Aorta (tissue), 5 donors: ENCODE measurements at regions of chr1 and their contacts with region 1.

Region 1: DNA sequence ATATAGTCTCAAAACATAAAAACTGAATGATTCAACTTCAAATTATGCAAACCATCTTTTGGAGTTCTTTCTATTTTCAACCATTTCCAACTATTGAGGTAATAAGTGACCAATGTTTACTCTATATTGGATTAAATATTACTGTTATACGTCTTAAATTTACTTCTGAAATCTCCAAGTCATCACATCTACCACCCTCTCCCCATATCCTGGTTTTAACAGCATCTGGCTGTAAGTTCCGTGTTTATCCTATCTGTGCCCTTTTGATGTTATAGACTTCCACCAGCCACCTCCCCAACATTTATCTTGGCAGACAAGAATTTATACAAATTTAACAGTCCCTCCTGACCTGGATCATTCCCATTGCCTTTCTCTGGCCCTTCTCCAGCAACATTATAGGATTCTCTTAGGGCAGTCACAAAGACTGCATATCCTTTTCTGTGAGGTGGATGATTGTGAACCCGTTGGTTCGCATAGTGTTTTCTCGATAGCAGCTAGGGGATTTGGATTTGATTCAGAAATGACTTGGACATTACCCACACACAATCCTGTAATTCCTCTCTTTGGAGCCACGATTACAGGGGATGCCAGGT is 313.4 kb upstream of the FMN2 start:
- DNase-seq: no peak
- ATAC-seq: no peak
- H3K4me3 ChIP-seq: no peak overlapping the region
- H3K27ac ChIP-seq: no peak overlapping the region
- H3K4me1 ChIP-seq: peaks cover 3 to 4% of the 10 kb centered on the region in 2 donors
- H3K27me3 ChIP-seq: no peaks in the 10 kb centered on the region

Region 2: GRCh38 chr1:239204401-239204800 is 573.9 kb before region 1 on chr1:
- intact Hi-C with region 1: no loop called
- DNase-seq: no peak
- ATAC-seq: no peak
- H3K4me3 ChIP-seq: no peak overlapping the region
- H3K27ac ChIP-seq: no peak overlapping the region
- H3K4me1 ChIP-seq: no peaks in the 10 kb centered on the region
- H3K27me3 ChIP-seq: no peaks in the 10 kb centered on the region

Region 3: DNA sequence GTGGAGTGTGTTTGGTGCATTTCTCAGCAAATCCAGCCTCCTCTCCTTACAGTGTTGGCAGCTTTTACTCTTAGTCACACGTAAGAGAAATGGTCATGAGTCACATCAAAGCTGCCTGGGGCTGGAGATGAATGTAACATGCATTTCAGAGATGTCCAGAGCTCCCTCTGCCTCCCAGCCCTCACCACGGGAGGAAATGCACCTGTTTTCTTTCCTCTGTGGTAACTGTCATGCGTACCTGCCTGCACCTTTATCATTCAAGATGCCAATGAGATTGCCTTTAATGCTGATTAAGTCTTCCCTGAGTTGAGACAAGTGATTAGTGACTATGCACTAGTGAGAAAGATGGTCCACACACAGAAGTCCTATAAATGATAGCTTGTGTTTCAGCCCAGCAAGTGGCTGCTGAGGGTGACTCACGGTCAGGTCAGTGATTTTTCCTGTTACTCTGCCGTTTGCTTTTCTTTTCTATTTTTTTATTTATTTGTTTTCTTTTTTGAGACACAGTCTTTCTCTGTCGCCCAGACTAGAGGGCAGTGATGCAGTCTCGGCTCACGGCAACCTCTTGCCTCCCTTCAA is 36.1 kb after region 1 on chr1:
- intact Hi-C with region 1: loop called in 1 of 2 experiments (anchors 5 kb)
- DNase-seq: peak in 1 of 2 donors; percentile 50
- ATAC-seq: peak; percentile 65
- H3K4me3 ChIP-seq: no peak overlapping the region
- H3K27ac ChIP-seq: peak overlapping the region in 1 of 2 donors; percentile 80
- H3K4me1 ChIP-seq: peaks cover 0 to 2% of the 10 kb centered on the region in 2 donors
- H3K27me3 ChIP-seq: no peaks in the 10 kb centered on the region

Region 4: DNA sequence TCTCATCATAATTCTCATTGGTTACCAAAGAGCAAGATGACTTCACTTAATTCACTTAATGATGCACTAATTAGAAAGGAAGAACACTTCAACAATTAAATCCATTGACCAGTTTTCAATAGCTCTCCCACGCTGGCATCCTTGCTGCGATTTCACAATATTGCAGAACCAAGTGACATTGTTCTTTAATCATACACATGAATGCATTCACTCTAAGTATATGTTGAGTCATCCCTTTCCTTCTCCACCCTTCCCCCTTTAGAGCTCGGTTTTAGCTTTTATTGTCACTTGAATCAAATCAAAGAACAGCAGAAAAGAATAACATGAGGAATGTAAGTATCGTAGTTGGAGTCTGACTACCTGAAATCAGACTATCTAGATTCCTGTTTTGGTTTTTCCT is 79.7 kb after region 1 on chr1:
- intact Hi-C with region 1: no loop called
- DNase-seq: no peak
- ATAC-seq: no peak
- H3K4me3 ChIP-seq: no peak overlapping the region
- H3K27ac ChIP-seq: no peak overlapping the region
- H3K4me1 ChIP-seq: peaks cover 0 to 1% of the 10 kb centered on the region in 2 donors
- H3K27me3 ChIP-seq: no peaks in the 10 kb centered on the region